ENCODE measurements at regions of chr3 and their contacts with region 1.

Region 1: DNA sequence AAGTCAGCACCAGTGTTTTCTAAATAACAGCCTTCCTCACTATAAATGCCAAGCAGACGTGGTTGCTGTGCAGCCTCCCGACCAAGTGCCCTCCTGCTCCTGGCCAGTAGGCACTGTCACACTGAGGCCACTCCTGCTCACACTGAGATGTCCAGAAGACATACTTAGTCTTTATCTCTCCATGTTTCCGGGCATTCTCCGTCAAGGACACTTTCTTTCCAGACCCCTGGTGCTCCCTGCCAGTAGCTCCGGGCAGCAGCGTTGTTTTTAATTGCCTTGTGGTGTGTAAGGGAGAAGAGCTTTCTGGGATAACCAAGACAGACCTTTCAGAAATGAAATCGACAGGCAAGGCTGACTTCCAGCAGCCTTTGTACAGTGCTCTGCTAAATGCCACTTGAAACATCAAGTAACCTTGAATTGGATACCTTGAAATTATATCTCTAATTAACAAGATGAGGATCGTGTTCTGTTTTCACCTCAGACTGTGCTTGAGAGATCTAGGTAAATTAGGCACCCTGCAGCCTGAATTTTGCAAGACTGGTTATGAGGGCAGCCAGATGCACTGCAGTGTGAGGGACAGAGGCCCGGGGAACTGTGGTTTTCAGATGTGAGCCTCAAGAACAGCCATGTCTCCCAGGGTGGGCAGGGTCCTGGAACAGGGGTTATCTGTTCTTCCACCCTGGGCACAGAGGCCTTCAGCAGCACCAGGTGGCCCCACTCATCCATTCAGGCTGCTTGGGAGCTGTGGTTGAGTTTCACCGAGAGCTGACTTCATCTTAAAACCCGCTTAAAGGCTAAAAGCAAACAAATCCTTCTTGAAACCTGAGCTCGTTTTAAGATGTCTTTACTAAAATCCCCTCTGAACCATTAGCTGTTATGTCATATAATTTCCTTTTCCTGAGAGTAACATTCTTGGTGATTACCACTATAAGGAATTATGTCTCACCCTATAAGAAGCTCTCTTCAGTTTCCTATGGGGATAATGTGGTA is 105.5 kb upstream of the IL12A start:
- DNase-seq: no peak
- H3K4me3 Mint-ChIP-seq: no peak overlapping the region
- H3K27ac Mint-ChIP-seq: no peak overlapping the region
- H3K4me1 Mint-ChIP-seq: no peaks in the 10 kb centered on the region
- H3K27me3 Mint-ChIP-seq: peaks cover 10% of the 10 kb centered on the region

Region 2: DNA sequence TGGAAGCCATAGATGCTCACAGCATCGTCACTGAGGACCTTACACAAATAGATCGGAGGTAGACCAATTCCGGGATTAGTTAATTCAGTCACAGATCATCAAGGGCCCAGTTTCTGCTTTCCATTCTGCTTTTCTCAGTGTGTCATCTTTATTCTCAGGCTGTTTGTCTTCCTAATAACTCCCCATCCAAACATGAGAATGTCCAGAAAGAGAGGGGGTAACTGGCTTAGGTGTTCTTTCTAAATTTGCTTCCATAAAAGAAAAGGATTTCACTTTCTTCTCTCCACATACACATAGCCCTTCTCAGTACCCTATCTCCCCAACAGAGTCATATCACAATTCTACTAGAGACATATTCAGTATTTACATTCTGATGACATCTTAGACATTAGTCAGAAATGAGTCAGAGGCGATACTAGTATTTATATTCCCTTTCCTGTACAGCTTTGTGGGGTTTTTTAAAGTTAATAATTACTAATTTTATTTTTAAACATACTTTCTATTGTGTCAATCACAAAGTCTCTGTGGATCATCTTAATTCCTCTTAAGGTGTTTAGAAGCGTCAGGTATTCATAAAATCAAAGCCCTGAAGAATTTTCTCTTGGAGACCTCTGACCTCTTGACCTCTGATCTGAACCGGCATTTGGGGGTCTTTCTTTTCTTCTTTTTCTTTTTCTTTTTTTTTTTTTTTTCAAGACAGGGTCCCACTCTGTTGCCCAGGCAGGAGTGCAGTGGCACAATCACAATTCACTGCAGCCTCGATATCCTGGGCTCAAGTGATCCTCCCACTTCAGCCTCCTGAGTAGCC is 81.3 kb after region 1 on chr3:
- CTCF ChIA-PET with region 1: no interaction called
- POLR2A ChIA-PET with region 1: no interaction called
- DNase-seq: no peak
- H3K4me3 Mint-ChIP-seq: no peak overlapping the region
- H3K27ac Mint-ChIP-seq: no peak overlapping the region
- H3K4me1 Mint-ChIP-seq: no peaks in the 10 kb centered on the region
- H3K27me3 Mint-ChIP-seq: peaks cover 7% of the 10 kb centered on the region

Region 3: DNA sequence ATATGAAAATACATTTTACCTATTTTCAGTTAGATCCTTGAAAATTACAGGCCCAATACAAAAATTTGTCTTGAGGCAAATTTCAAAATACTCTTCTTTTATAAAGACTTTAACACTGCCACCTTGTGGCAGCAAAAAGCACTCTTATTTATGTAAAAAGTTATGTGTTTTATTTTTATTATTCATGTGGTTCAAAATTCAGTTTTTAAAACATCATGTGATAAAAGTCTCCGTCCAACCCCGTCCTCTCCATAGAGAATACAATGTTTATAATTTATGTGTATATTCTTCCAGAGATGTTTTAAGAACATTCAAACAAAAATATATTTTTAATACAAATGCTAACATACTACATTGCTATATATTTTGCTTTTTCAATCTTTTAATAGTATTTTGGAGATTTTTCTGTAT is 603.4 kb after region 1 on chr3:
- CTCF ChIA-PET with region 1: no interaction called
- POLR2A ChIA-PET with region 1: interaction called, 10 read pairs
- DNase-seq: peak; percentile 37
- H3K4me3 Mint-ChIP-seq: no peak overlapping the region
- H3K27ac Mint-ChIP-seq: no peak overlapping the region
- H3K4me1 Mint-ChIP-seq: peaks cover 6% of the 10 kb centered on the region
- H3K27me3 Mint-ChIP-seq: peaks cover 2% of the 10 kb centered on the region